Transverse colon (tissue), 4 donors: ENCODE measurements at regions of chr1 and their contacts with region 1.

Region 1: DNA sequence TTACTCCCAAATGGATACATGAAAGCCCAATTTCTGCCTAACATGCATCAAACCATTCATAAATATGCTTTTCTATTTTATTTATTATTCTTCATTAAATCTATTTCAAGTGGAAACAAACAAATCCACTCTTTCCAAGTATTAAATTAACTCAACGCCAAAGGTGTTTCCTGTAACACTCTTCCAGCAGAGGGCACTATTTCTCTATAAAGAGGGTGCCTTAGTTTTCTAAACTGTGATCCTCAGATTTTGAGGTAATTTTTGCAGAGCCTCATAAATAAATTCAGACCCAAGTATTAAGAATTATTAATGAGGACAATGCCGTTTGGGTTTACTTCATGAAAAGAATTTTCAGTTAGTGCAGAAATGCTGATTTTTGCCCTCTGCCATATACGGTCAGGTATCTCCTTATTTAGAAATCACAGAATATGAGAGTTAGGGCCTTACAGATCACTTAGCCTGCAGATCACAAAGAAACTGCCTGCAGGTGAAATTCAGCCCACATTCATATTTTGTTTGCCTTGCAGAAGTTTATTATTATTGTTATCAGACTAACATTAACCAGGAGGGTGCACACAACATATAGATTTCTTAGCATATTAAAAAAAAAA is 40.1 kb upstream of the MYSM1 start:
- DNase-seq: no peak
- H3K4me3 ChIP-seq: no peak overlapping the region
- H3K27ac ChIP-seq: no peak overlapping the region
- H3K4me1 ChIP-seq: peaks cover 0 to 7% (median 0%) of the 10 kb centered on the region in 4 donors
- H3K27me3 ChIP-seq: no peaks in the 10 kb centered on the region
- CTCF ChIP-seq: peak; percentile 87 to 90 (median 87)
- EP300 ChIP-seq: no peak
- POLR2A ChIP-seq: no peak

Region 2: DNA sequence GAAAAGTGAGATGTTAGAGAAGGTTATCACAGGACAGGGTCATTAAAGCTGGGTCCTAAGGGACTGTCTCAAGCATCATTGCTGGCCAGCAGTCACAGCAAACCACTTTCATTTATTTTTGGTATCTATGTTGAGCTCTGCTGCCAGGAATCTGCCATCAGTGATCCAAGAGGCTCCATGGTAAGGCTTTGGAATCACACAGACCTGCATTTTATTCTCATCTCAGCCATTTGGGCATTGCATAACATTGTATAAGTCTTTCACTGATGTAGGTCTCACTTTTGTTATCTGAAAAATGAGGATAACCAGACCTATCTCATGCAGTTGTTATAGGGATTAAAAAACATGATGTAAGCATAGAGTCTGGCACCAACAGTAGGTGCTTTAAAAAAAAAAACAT is 270.9 kb before region 1 on chr1:
- in situ Hi-C with region 1: no loop called
- intact Hi-C with region 1: no loop called
- DNase-seq: no peak
- H3K4me3 ChIP-seq: no peak overlapping the region
- H3K27ac ChIP-seq: no peak overlapping the region
- H3K4me1 ChIP-seq: no peaks in the 10 kb centered on the region
- H3K27me3 ChIP-seq: no peaks in the 10 kb centered on the region
- CTCF ChIP-seq: no peak
- EP300 ChIP-seq: no peak
- POLR2A ChIP-seq: no peak

Region 3: DNA sequence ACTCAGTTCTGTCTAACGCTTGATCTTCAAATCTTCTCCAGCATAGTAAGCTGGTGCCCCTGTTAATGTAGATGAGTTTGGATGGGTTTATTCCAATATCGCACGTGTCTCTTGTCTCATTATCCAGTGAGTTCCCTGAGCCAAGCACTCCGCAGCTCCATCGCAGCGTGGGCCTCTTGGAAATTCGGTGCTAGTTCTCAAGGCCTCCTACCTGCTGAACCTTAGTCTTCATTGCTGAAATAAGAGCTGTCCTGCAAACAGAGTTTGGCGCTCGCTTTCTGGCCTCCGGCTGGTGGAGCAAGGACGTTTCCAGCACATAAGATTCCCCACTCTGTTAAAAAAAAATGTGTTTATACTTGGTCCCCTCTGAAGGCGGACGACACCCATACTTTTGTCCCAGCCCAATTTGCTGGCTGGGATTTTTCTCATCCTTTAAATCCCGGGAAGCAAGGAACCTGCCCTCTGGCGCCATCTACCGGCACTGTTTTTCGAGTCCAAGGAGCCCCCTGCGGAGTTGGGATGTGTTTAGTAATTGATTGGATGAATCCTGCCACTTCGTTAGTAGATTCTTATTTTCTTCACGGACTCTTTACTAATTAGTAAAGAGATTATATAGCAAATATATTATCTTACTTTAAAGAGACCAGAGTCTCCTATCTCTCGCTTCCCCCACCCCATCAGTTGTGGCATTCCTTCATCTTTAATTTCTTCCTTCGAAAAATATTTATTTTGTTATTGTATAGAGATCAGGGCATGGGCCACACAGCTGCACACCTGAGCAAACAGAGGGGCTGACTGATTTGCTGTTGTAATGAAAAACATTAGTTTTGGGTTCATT is 29.2 kb after region 1 on chr1:
- in situ Hi-C with region 1: no loop called
- intact Hi-C with region 1: loop called (anchors 2 kb)
- DNase-seq: peak; percentile 78
- H3K4me3 ChIP-seq: no peak overlapping the region
- H3K27ac ChIP-seq: no peak overlapping the region
- H3K4me1 ChIP-seq: peaks cover 0 to 13% (median 8%) of the 10 kb centered on the region in 4 donors
- H3K27me3 ChIP-seq: no peaks in the 10 kb centered on the region
- CTCF ChIP-seq: peak; percentile 59 to 87 (median 85)
- EP300 ChIP-seq: no peak
- POLR2A ChIP-seq: no peak

Region 4: GRCh38 chr1:58883037-58883887 is 143.3 kb after region 1 on chr1:
- in situ Hi-C with region 1: no loop called
- intact Hi-C with region 1: no loop called
- DNase-seq: peak; percentile 72
- H3K4me3 ChIP-seq: no peak overlapping the region
- H3K27ac ChIP-seq: peak overlapping the region; percentile 47 to 75 (median 60)
- H3K4me1 ChIP-seq: peaks cover 12 to 54% (median 40%) of the 10 kb centered on the region in 4 donors
- H3K27me3 ChIP-seq: no peaks in the 10 kb centered on the region
- CTCF ChIP-seq: no peak
- EP300 ChIP-seq: peak; percentile 29
- POLR2A ChIP-seq: no peak

Region 5: GRCh38 chr1:59296358-59297256 is 556.6 kb after region 1 on chr1 and contains the start of gene FGGY:
- in situ Hi-C with region 1: loop called in 1 of 4 experiments (anchors 25 kb)
- intact Hi-C with region 1: no loop called
- DNase-seq: peak; percentile 97
- H3K4me3 ChIP-seq: peak within 1 kb of the TSS; percentile 34 to 57 (median 41)
- H3K27ac ChIP-seq: peak within 1 kb of the TSS; percentile 92 to 98 (median 95)
- H3K4me1 ChIP-seq: peaks cover 11 to 28% (median 14%) of the 10 kb centered on the region in 4 donors
- H3K27me3 ChIP-seq: no peaks in the 10 kb centered on the region
- CTCF ChIP-seq: peak in 1 of 5 experiments; percentile 18
- EP300 ChIP-seq: no peak
- POLR2A ChIP-seq: peak; percentile 92
- total RNA-seq, gene FGGY: 18.2 to 97.7 (median 27.1) TPM

Region 6: DNA sequence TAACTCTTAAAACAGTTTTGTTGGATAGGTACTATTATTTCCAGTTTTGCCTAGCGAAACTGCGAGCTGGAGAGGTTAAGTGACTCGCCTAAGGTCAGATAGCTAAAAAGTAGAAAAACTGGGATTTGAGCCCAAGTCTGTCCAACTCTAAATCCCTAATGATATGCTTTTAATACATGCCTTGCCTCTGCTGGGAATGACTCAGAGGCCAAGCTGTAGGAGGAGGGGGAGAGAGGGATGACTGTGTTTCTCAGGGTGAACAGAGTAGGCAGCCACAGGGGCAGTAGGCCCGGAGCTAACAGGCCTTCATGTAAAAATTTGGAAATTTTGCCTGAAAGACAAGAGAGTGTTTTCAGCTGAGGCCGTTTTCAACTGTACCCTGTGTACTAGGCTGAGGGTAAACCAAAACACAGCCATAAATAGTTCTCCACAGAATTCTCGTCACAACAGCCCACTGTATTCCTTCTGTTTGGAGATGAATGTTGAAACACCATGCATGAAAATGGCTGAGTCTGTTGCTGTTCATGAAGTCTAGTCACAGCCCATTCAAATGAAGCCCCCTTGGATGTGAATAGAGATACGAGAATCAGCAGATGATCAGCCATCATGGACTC is 967.3 kb after region 1 on chr1:
- in situ Hi-C with region 1: loop called in 3 of 4 experiments (anchors 5 to 25 kb)
- intact Hi-C with region 1: no loop called
- DNase-seq: peak; percentile 24
- H3K4me3 ChIP-seq: no peak overlapping the region
- H3K27ac ChIP-seq: peak overlapping the region; percentile 55 to 66 (median 60)
- H3K4me1 ChIP-seq: peaks cover 4 to 43% (median 19%) of the 10 kb centered on the region in 4 donors
- H3K27me3 ChIP-seq: no peaks in the 10 kb centered on the region
- CTCF ChIP-seq: no peak
- EP300 ChIP-seq: no peak
- POLR2A ChIP-seq: no peak

Region 7: DNA sequence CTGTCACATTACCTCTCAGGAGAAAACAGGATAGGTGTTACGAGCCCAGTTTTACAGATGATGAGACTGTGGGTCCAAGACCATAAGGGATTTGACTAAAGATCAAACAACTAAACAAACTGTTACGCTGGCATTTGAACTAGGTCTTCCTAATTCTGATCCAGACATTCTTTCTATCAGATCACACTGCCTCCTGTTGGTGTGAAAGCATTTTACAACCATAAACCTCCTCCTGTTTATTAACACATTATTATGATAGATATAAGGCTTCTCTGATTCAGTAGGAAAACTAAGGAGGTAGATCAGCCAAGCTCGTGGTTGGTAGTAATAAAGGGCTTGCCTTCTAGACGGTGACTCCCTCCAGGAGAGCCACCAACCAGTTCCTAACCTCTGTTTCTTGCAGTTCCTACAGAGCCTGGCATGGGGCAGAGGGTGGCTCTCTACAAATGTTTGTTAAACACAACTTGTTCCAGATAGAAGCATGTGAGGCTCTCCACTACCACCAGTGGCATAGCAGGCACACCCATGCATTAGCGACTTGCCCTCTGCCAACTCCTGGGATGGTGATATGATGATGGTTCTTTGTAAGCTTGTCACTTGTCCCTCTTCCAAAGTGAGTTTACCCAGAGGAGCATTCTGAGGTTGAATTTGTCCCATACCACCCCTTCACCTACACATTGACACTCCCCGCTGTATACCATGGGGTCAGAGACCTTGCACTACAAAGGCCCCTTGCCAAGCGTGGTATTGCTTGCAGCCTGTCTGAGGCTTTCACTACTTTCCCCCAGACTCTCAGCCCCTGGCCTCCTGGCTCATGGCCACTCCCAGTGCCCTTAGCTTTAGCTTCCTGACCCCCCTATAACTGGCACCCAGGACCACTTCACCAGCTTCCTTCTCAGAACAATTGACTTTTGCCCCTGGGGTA is 978.4 kb after region 1 on chr1:
- in situ Hi-C with region 1: loop called in 2 of 4 experiments (anchors 10 to 25 kb)
- intact Hi-C with region 1: no loop called
- DNase-seq: no peak
- H3K4me3 ChIP-seq: no peak overlapping the region
- H3K27ac ChIP-seq: no peak overlapping the region
- H3K4me1 ChIP-seq: no peaks in the 10 kb centered on the region
- H3K27me3 ChIP-seq: no peaks in the 10 kb centered on the region
- CTCF ChIP-seq: peak; percentile 13 to 37 (median 32)
- EP300 ChIP-seq: no peak
- POLR2A ChIP-seq: no peak

Region 8: DNA sequence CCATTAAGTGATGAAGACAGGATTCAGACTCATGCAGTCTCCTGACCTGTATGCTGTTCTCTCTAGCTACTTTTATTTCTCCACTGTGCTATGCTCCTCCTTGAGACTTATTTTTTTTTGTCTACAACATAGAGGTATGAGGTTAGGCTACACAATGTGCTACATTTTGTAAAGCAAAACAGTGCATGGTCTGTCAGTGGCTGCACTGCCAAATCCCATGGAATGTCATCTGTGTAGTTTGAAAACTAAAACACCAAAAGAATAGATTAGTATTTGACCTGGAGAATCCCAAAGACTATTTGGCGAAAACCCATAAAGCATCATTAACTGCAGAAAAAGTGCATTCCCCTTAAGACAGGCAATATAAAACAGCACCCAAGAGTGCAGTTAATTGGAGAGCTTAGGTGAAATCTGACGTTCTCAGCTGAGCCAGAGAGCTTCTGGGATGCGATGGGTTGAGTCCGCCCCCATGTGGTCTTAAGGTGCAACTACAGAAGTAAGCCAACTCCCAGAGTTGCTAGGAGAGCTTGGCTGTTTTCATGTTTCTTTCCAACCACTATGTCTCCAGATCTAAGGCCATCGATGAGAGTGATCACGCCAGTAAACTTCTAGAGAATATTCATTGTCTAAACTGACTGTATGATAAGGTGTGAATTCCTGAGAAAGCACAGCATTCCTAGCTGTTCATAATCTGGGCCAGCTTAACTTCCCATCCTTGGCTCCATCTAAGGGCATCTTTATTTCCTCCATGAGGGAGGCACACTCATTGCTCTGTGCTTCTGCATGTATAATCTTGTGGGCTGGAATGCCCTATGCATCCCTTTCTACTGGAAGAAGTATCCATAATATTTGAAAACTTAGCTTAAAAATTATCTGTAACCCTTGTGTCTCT is 1207.3 kb after region 1 on chr1:
- in situ Hi-C with region 1: loop called in 1 of 4 experiments (anchors 25 kb)
- intact Hi-C with region 1: no loop called
- DNase-seq: peak; percentile 61
- H3K4me3 ChIP-seq: no peak overlapping the region
- H3K27ac ChIP-seq: no peak overlapping the region
- H3K4me1 ChIP-seq: no peaks in the 10 kb centered on the region
- H3K27me3 ChIP-seq: no peaks in the 10 kb centered on the region
- CTCF ChIP-seq: peak; percentile 84 to 92 (median 89)
- EP300 ChIP-seq: no peak
- POLR2A ChIP-seq: no peak